ENCODE measurements at regions of chr5 and their contacts with region 1.

Region 1: DNA sequence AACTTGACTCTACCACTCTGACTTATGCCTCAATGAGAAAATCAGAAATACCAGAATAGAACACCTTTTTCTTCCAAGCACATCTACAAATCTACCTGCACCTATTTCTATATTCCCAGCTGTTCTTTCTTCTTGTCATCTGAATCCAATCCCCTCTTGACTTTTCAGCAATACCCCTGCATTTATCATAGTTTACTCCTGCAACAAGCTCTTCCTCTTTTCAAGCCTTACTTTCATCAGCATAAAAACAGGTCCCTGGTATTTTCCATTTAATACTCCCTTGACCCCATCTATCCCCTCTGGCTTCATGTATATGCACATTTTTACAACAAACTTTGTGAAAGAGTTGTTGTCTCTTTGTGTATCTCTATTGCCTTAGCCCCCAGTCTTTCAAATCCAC is 3.1 kb downstream of the GEMIN5 start:
- DNase-seq: no peak
- ATAC-seq: no peak
- H3K4me3 ChIP-seq: no peak overlapping the region
- H3K27ac ChIP-seq: no peak overlapping the region
- H3K4me1 ChIP-seq: peaks cover 10% of the 10 kb centered on the region
- H3K27me3 ChIP-seq: no peaks in the 10 kb centered on the region
- CTCF ChIP-seq: no peak

Region 2: GRCh38 chr5:154794525-154795234 is 140.2 kb before region 1 on chr5:
- intact Hi-C with region 1: no loop called
- DNase-seq: no peak
- ATAC-seq: peak in 1 of 4 donors; percentile 27
- H3K4me3 ChIP-seq: no peak overlapping the region
- H3K27ac ChIP-seq: no peak overlapping the region
- H3K4me1 ChIP-seq: no peaks in the 10 kb centered on the region
- H3K27me3 ChIP-seq: no peaks in the 10 kb centered on the region
- CTCF ChIP-seq: no peak

Region 3: GRCh38 chr5:154899151-154899816 is 35.6 kb before region 1 on chr5:
- intact Hi-C with region 1: loop called in 1 of 2 experiments (anchors 5 kb)
- DNase-seq: peak in 1 of 2 donors; percentile 69
- ATAC-seq: peak in 2 of 4 donors; percentile 32 to 62
- H3K4me3 ChIP-seq: no peak overlapping the region
- H3K27ac ChIP-seq: no peak overlapping the region
- H3K4me1 ChIP-seq: no peaks in the 10 kb centered on the region
- H3K27me3 ChIP-seq: no peaks in the 10 kb centered on the region
- CTCF ChIP-seq: no peak